K562 (cell line): ENCODE measurements at regions of chr1 and their contacts with region 1.

Region 1: GRCh38 chr1:27556781-27557595 is 47.0 kb downstream of the AHDC1 start:
- DNase-seq: peak; percentile 93 to 95 (median 94)
- ATAC-seq: peak; percentile 84
- H3K4me3 ChIP-seq: no peak overlapping the region
- H3K27ac ChIP-seq: peak overlapping the region; percentile 75
- H3K4me1 ChIP-seq: peaks cover 59 to 62% of the 10 kb centered on the region in 2 experiments
- H3K27me3 ChIP-seq: no peaks in the 10 kb centered on the region
- CTCF ChIP-seq: peak; percentile 91 to 93 (median 92)
- EP300 ChIP-seq: no peak; the same call in 1 of the 2 replicates
- POLR2A ChIP-seq: no peak
- RAD21 ChIP-seq: peak; percentile 79 to 89

Region 2: GRCh38 chr1:27542408-27543273 is 14.3 kb before region 1 on chr1:
- CTCF ChIA-PET with region 1: no interaction called
- POLR2A ChIA-PET with region 1: interaction called, 18 read pairs
- in situ Hi-C with region 1: no loop called
- intact Hi-C with region 1: no loop called
- DNase-seq: peak; percentile 98 to 100 (median 99)
- ATAC-seq: peak; percentile 93
- H3K4me3 ChIP-seq: no peak overlapping the region
- H3K27ac ChIP-seq: peak overlapping the region; percentile 97
- H3K4me1 ChIP-seq: peaks cover 60 to 79% of the 10 kb centered on the region in 2 experiments
- H3K27me3 ChIP-seq: no peaks in the 10 kb centered on the region
- CTCF ChIP-seq: no peak; a peak in 1 of 6 replicates
- EP300 ChIP-seq: peak; percentile 98
- POLR2A ChIP-seq: peak; percentile 67
- RAD21 ChIP-seq: no peak; a peak in 3 of 4 replicates

Region 3: DNA sequence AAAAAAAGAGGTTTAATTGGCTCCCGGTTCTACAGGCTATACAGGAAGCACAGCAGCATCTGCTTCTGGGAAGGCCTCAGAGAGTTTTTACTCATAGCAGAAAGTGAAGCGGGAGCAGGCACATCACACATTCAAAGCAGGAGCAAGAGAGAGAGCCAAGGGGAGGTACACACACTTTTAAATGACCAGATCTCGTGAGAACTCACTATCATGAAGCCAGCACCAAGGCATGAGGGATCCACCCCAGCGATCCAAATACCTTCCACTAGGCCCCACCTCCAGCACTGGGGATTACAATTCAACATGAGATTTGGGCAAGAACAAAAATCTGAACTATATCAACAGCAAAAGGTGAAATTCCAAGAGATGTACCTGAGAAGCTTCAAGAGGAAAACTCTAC is 148.0 kb after region 1 on chr1:
- CTCF ChIA-PET with region 1: no interaction called
- POLR2A ChIA-PET with region 1: no interaction called
- in situ Hi-C with region 1: no loop called
- intact Hi-C with region 1: no loop called
- DNase-seq: no peak
- ATAC-seq: no peak
- H3K4me3 ChIP-seq: no peak overlapping the region
- H3K27ac ChIP-seq: no peak overlapping the region
- H3K4me1 ChIP-seq: no peaks in the 10 kb centered on the region
- H3K27me3 ChIP-seq: no peaks in the 10 kb centered on the region; a peak in 1 of 5 replicates
- CTCF ChIP-seq: no peak
- EP300 ChIP-seq: no peak
- POLR2A ChIP-seq: no peak
- RAD21 ChIP-seq: no peak